ENCODE measurements at regions of chr2 and their contacts with region 1.

Region 1: GRCh38 chr2:118003396-118003824 is 10.5 kb downstream of the CCDC93 start:
- DNase-seq: peak; percentile 36
- H3K4me3 ChIP-seq: no peak overlapping the region
- CTCF ChIP-seq: peak; percentile 73

Region 2: DNA sequence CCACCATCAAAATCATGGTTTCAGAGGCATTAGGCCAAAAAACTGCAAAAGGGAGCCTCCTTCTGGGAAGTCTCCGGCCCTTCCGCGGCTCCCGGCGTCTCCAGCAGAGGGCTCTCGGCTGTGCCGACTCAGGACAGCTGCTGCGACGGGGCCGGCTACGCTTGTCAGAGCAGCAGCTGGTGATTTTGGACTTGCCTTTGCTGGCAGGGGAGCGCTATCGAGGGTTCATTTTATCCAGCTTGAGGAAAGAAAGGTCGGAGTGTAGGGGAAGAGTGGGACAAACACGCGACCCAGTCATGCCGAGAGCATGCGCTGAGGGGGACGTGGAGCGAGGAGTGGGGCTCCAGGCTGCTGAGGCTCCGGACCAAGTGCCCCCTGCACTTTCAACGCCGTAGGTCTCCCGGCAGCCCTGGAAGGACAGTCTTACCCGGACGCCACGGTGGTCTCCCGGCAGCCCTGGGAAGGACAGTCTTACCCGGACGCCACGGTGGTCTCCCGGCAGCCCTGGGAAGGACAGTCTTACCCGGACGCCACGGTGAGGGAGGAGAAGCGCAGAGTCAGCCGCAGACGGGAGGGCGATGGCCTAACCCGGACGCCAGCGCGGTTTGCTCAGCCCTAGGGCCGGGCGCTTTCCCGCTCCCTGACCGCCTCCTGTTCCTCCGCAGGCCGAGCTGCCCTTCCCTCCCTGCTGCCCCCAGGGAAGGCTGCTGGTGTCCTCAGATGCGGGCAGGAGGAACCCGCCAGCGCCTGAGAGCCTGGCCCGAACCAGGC is 167.2 kb before region 1 on chr2:
- CTCF ChIA-PET with region 1: interaction called, 519 read pairs
- POLR2A ChIA-PET with region 1: interaction called, 7 read pairs
- DNase-seq: peak; percentile 29
- H3K4me3 ChIP-seq: peak overlapping the region; percentile 55
- CTCF ChIP-seq: peak; percentile 97

Region 3: DNA sequence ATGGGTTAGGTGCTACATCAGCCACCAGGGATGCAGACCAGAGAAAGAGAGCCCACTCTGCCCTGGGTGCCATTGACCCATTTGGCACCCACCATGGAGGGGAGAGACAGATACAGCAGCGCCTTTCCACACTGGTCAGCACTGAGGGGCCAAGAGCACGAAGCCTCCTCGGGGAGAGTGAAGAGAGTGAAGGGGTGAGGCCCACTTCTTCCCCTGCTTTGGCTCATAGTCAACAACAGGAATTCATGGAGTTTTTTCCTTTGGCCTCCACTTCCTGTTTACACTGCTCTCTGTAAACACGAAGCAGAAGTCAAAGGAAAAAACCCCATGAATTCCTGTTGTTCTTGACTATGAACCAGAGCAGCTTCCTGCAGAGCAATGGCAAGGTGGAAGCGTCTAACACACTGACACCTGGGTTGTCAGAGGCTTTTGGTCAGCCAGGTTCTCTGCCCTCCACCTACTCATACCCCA is 69.5 kb before region 1 on chr2:
- CTCF ChIA-PET with region 1: interaction called, 52 read pairs
- POLR2A ChIA-PET with region 1: no interaction called
- DNase-seq: no peak
- H3K4me3 ChIP-seq: no peak overlapping the region
- CTCF ChIP-seq: no peak

Region 4: GRCh38 chr2:117958186-117958585 is 45.2 kb before region 1 on chr2:
- CTCF ChIA-PET with region 1: interaction called, 61 read pairs
- POLR2A ChIA-PET with region 1: no interaction called
- DNase-seq: peak; percentile 59
- H3K4me3 ChIP-seq: no peak overlapping the region
- CTCF ChIP-seq: no peak

Region 5: DNA sequence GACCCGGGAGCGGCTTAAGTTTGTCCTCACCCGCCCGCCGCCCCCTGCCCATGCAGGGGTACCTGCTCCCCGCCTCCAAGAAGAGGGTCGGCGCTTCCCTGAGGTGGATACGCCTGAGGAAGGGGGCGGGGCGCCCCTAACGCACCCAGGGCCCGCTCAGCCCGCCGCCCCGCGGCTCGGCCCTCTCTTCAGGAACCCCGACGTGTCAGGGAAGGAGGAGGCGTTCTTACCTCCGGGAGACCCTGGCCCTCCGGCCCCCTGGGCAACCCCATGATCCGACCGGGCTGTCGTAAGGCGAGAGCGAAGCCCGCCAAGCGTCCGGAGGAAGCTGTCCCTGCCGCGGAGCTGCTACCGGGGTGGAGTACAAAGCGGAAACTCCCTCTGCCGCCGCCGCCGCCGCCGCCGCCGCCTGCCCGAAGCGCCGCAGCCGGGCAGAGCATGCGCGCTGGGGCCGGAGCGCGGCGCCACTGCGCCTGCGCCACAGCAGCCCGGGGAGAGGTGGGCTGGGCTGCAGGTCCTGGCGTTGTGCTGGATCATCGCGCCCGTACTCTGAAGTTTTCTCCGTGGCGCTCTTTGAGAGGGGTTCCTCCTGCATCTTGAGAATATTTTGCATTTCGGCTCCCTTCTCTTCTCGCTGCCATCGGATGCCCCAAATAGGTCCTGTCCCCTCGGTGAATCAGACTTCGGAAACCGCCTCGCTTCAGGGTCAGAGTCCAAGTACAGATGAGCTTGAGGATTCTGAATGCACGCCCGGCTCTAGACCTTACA is 10.5 kb after region 1 on chr2 and contains the start of gene CCDC93:
- CTCF ChIA-PET with region 1: interaction called, 52 read pairs
- POLR2A ChIA-PET with region 1: no interaction called
- DNase-seq: no peak
- H3K4me3 ChIP-seq: peak within 1 kb of the TSS; percentile 96
- CTCF ChIP-seq: no peak

Region 6: GRCh38 chr2:118678985-118679384 is 675.6 kb after region 1 on chr2:
- CTCF ChIA-PET with region 1: no interaction called
- POLR2A ChIA-PET with region 1: no interaction called
- DNase-seq: no peak
- H3K4me3 ChIP-seq: no peak overlapping the region
- CTCF ChIP-seq: no peak

Measured in AG04449 (cell line).